GM12878 (cell line): ENCODE measurements at regions of chr2 and their contacts with region 1.

Region 1: DNA sequence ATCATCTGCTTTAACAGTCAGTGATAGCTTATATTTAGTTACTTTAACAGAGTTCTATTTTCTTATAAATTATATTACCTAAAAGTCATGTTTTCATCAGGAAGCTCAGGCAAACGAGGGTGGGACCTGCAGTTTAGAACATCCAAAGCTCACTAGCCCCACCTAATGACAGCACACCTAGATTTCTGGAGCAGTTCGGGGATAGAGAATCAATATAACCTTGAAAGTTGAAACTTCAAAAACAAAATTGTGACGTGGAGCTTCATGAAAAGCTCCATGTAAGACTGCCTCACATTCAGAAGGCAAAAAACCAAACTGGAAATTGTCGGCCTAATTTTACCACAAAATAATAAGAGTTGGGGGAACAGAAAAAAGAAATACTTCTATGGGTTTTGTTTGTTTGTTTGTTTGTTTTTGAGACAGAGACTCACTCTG is 185.9 kb upstream of the CCDC150 start:
- DNase-seq: peak; percentile 72
- ATAC-seq: peak; percentile 90
- H3K4me3 ChIP-seq: no peak overlapping the region
- H3K27ac ChIP-seq: peak overlapping the region; percentile 64
- H3K4me1 ChIP-seq: peaks cover 10% of the 10 kb centered on the region
- H3K27me3 ChIP-seq: no peaks in the 10 kb centered on the region
- CTCF ChIP-seq: peak; percentile 74 to 81 (median 79)
- EP300 ChIP-seq: no peak
- POLR2A ChIP-seq: no peak
- RAD21 ChIP-seq: peak; percentile 99

Region 2: GRCh38 chr2:195861821-195862220 is 591.8 kb before region 1 on chr2:
- CTCF ChIA-PET with region 1: no interaction called
- POLR2A ChIA-PET with region 1: no interaction called
- RAD21 ChIA-PET with region 1: no interaction called
- SMC1A ChIA-PET with region 1: no interaction called
- in situ Hi-C with region 1: no loop called
- intact Hi-C with region 1: no loop called
- DNase-seq: no peak
- ATAC-seq: no peak
- H3K4me3 ChIP-seq: no peak overlapping the region
- H3K27ac ChIP-seq: no peak overlapping the region
- H3K4me1 ChIP-seq: no peaks in the 10 kb centered on the region
- H3K27me3 ChIP-seq: no peaks in the 10 kb centered on the region
- CTCF ChIP-seq: no peak
- EP300 ChIP-seq: no peak
- POLR2A ChIP-seq: no peak
- RAD21 ChIP-seq: no peak

Region 3: GRCh38 chr2:196068271-196069209 is 385.1 kb before region 1 on chr2 and contains the start of gene DNAH7:
- CTCF ChIA-PET with region 1: interaction called, 25 read pairs
- POLR2A ChIA-PET with region 1: no interaction called
- RAD21 ChIA-PET with region 1: interaction called, 20 read pairs
- SMC1A ChIA-PET with region 1: interaction called, 16 read pairs
- in situ Hi-C with region 1: no loop called
- intact Hi-C with region 1: no loop called
- DNase-seq: peak; percentile 64
- ATAC-seq: peak; percentile 98
- H3K4me3 ChIP-seq: peak within 1 kb of the TSS; percentile 68
- H3K27ac ChIP-seq: peak within 1 kb of the TSS; percentile 43
- H3K4me1 ChIP-seq: no peaks in the 10 kb centered on the region; the same call in 1 of the 2 replicates
- H3K27me3 ChIP-seq: no peaks in the 10 kb centered on the region
- CTCF ChIP-seq: peak; percentile 91 to 98 (median 97); a peak in 5 of 6 replicates
- EP300 ChIP-seq: no peak; a peak in 1 of 4 replicates
- POLR2A ChIP-seq: peak; percentile 22; the same call in 1 of the 2 replicates
- RAD21 ChIP-seq: peak; percentile 92
- polyA plus RNA-seq, gene DNAH7: 0.05 to 0.14 TPM

Region 4: DNA sequence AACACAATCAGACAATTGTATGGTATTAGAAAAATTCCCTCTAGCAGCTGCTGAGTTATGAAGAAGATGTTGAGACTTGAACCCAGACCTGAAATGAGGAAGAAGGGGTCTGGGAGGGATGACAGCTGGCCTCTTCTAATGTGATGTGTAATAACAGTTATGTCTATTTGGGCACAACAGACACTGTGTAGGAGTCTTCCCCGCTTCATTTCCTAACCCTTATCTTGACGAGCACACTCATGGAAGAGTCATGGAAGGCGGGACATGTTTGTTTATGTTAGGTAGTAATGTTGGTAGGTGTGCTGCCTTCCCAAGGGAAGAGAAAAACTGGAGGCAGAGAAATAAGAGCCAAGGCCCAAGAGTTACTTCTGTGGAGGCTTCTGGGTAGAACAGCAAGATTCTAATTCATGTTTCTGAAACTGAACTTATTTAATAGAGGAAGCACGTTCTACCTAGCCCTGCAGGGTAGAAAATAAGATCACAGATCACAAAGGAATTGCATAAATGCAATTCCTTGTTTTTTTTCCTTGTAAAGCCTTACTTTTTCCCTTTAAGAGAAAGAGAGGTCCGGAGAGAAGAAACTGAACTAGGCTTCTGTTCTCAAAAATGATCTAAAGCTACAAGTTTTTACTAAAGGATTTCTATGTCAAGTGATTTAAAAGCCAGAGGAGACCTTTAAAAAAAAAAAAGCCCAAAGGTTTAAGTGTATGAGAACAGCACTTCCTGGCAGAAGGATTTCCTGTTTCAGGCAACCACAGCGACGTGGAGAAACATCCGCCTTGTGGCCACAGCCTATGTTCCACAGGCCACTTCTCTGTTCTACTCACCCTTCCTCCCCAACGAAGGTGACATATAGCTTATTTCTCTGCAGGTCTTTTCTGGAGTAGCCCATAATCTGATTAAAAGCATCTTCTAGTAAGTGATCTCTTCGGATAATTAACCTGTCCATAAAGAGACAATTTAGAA is 213.7 kb before region 1 on chr2:
- CTCF ChIA-PET with region 1: interaction called, 13 read pairs
- POLR2A ChIA-PET with region 1: interaction called, 4 read pairs
- RAD21 ChIA-PET with region 1: no interaction called
- SMC1A ChIA-PET with region 1: interaction called, 3 read pairs
- in situ Hi-C with region 1: no loop called
- intact Hi-C with region 1: no loop called
- DNase-seq: peak; percentile 86
- ATAC-seq: peak; percentile 79
- H3K4me3 ChIP-seq: no peak overlapping the region
- H3K27ac ChIP-seq: peak overlapping the region; percentile 75
- H3K4me1 ChIP-seq: peaks cover 36% of the 10 kb centered on the region
- H3K27me3 ChIP-seq: no peaks in the 10 kb centered on the region
- CTCF ChIP-seq: 0 out of 6 replicates have a peak, but pooled peaks of 1 of the 3 experiments have one; percentile 3
- EP300 ChIP-seq: peak; percentile 74 to 85
- POLR2A ChIP-seq: no peak
- RAD21 ChIP-seq: 0 out of 2 replicates have a peak, but pooled peaks have one; percentile 19

Region 5: GRCh38 chr2:196314780-196315179 is 138.8 kb before region 1 on chr2:
- CTCF ChIA-PET with region 1: interaction called, 6 read pairs
- POLR2A ChIA-PET with region 1: no interaction called
- RAD21 ChIA-PET with region 1: interaction called, 12 read pairs
- SMC1A ChIA-PET with region 1: interaction called, 5 read pairs
- in situ Hi-C with region 1: no loop called
- intact Hi-C with region 1: no loop called
- DNase-seq: no peak
- ATAC-seq: no peak
- H3K4me3 ChIP-seq: no peak overlapping the region
- H3K27ac ChIP-seq: no peak overlapping the region
- H3K4me1 ChIP-seq: no peaks in the 10 kb centered on the region
- H3K27me3 ChIP-seq: no peaks in the 10 kb centered on the region
- CTCF ChIP-seq: no peak
- EP300 ChIP-seq: no peak
- POLR2A ChIP-seq: no peak
- RAD21 ChIP-seq: no peak

Region 6: GRCh38 chr2:196376984-196377877 is 76.4 kb before region 1 on chr2:
- CTCF ChIA-PET with region 1: interaction called, 39 read pairs
- POLR2A ChIA-PET with region 1: interaction called, 3 read pairs
- RAD21 ChIA-PET with region 1: interaction called, 37 read pairs
- SMC1A ChIA-PET with region 1: interaction called, 33 read pairs
- in situ Hi-C with region 1: no loop called
- intact Hi-C with region 1: loop called (anchors 2 kb)
- DNase-seq: peak; percentile 93
- ATAC-seq: peak; percentile 77
- H3K4me3 ChIP-seq: no peak overlapping the region
- H3K27ac ChIP-seq: peak overlapping the region; percentile 99
- H3K4me1 ChIP-seq: peaks cover 29% of the 10 kb centered on the region
- H3K27me3 ChIP-seq: no peaks in the 10 kb centered on the region
- CTCF ChIP-seq: no peak
- EP300 ChIP-seq: 0 out of 4 replicates have a peak, but pooled peaks of 1 of the 2 experiments have one; percentile 4
- POLR2A ChIP-seq: no peak
- RAD21 ChIP-seq: peak; percentile 34; the same call in 1 of the 2 replicates

Region 7: DNA sequence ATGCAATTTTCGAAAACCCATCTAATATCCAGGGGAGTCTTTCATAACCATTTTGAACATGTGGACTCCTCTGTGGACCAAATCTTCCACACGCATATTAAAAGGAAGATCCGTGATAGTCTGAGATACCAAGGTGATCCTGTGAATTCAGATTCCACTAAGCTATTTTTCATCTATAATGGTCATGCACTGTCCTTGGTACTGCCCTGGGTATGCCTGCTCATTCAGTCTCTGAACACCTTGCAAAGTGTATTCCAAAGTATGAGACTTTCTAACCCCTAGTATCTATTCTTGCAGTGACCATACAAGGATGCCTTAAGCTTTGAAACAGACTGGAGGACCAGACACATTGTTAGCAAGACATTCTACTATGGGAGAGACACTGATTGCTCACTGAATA is 31.8 kb before region 1 on chr2:
- CTCF ChIA-PET with region 1: interaction called, 100 read pairs
- POLR2A ChIA-PET with region 1: no interaction called
- RAD21 ChIA-PET with region 1: interaction called, 72 read pairs
- SMC1A ChIA-PET with region 1: interaction called, 72 read pairs
- in situ Hi-C with region 1: no loop called
- intact Hi-C with region 1: no loop called
- DNase-seq: no peak
- ATAC-seq: no peak
- H3K4me3 ChIP-seq: no peak overlapping the region
- H3K27ac ChIP-seq: no peak overlapping the region
- H3K4me1 ChIP-seq: no peaks in the 10 kb centered on the region
- H3K27me3 ChIP-seq: no peaks in the 10 kb centered on the region
- CTCF ChIP-seq: no peak
- EP300 ChIP-seq: no peak
- POLR2A ChIP-seq: no peak
- RAD21 ChIP-seq: no peak

Region 8: DNA sequence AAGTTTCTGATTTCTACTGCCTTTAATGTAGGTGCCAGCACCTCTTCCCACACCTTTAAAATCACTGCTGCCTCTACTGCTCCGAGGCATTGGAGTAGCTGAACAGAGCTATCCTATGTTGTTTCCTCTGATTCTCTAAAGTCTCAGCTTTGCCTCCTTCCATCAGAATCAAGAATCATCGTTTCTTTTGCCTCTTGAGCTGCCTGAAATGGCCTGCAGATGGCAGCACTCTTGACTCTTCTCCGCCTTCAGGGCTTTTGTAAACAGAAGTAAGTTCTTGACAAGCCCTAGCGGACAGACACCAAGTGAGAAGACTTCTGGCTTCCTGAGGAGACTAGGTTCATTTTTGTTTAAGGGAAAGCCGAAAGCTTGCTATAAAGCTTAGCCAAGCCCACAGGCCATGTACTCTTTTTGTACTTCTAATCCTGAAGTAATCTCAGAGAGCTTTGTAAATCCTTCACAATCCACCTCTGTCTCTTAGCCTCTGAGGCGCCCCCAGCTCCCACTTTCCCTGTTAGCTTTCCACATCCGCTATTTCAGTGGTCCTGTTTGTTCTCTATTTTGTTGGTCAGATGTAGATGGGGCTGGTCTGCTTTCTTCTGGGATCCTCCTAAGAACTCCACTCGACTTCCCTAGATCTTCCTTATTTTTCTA is 297.5 kb after region 1 on chr2:
- CTCF ChIA-PET with region 1: interaction called, 4 read pairs
- POLR2A ChIA-PET with region 1: no interaction called
- RAD21 ChIA-PET with region 1: no interaction called
- SMC1A ChIA-PET with region 1: interaction called, 4 read pairs
- in situ Hi-C with region 1: no loop called
- intact Hi-C with region 1: loop called (anchors 10 kb)
- DNase-seq: peak; percentile 30
- ATAC-seq: peak; percentile 99
- H3K4me3 ChIP-seq: no peak overlapping the region
- H3K27ac ChIP-seq: no peak overlapping the region
- H3K4me1 ChIP-seq: no peaks in the 10 kb centered on the region; the same call in 1 of the 2 replicates
- H3K27me3 ChIP-seq: no peaks in the 10 kb centered on the region
- CTCF ChIP-seq: peak; percentile 76 to 84 (median 84)
- EP300 ChIP-seq: no peak
- POLR2A ChIP-seq: no peak
- RAD21 ChIP-seq: peak; percentile 47